H1 (cell line): ENCODE measurements at regions of chr7 and their contacts with region 1.

Region 1: DNA sequence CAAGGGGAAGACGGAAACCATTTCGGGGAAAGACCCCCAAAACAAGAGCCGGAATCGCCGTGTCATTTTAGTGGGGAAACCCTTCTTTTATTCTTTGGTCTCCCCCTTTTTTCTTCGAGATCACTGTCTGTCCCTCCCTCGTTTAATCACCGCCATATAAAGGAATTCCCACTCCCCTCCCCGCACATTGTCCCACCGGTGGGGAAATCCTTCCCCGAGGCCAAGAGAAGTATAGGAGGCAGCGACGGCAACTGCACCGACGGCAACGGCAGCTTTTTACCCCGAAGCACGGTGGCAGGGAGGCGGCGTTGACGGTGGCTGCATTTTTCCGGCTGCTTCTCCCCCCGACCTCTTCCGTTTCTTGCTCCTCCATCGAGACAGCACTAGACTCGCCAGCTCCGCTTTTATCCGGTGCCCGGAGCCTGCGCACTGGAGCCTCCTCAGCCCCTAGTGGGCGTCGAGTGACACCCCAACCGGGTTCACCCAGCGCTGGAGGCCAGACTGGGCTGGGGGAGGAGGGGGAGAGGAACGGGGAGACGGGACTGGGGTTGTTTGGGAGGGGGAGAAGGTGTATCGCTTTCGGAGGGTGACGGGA is 687 bp upstream of the KMT2E start:
- DNase-seq: peak; percentile 65 to 88
- H3K4me3 ChIP-seq: peak overlapping the region; percentile 89 to 99 (median 97)
- H3K27ac ChIP-seq: peak overlapping the region; percentile 100
- H3K4me1 ChIP-seq: peaks cover 0 to 9% (median 1%) of the 10 kb centered on the region in 4 experiments; a peak in 3 of 7 replicates
- H3K27me3 ChIP-seq: no peaks in the 10 kb centered on the region
- CTCF ChIP-seq: peak; percentile 37 to 58 (median 40)
- EP300 ChIP-seq: no peak
- POLR2A ChIP-seq: peak in 1 of 2 experiments; percentile 92; a peak in 2 of 3 replicates
- RAD21 ChIP-seq: no peak

Region 2: GRCh38 chr7:105003275-105003674 is 10.0 kb before region 1 on chr7:
- CTCF ChIA-PET with region 1: interaction called, 3 read pairs
- POLR2A ChIA-PET with region 1: interaction called, 56 read pairs
- DNase-seq: no peak
- H3K4me3 ChIP-seq: no peak overlapping the region
- H3K27ac ChIP-seq: no peak overlapping the region
- H3K4me1 ChIP-seq: peaks cover 0 to 8% (median 0%) of the 10 kb centered on the region in 4 experiments; a peak in 2 of 7 replicates
- H3K27me3 ChIP-seq: no peaks in the 10 kb centered on the region
- CTCF ChIP-seq: no peak
- EP300 ChIP-seq: no peak
- POLR2A ChIP-seq: no peak
- RAD21 ChIP-seq: no peak

Region 3: DNA sequence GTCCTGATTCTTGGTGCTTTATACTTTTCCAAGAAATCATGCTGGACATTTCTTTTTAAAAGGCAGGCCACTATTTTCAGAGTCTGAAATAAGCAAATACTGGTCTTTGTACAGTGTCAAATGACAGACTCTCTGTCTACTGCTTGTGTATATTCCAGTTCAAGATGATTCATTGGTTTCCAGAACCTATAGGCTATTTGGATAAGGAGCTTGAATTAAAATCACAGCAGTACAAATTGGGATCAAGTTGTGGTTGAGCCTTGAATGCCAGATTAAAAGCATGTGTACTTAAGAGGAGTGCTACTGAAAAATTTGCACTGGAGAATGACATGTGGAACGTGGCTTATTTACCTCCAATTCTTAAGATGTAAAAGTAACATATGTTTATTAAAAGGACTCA is 11.4 kb after region 1 on chr7:
- CTCF ChIA-PET with region 1: interaction called, 4 read pairs
- POLR2A ChIA-PET with region 1: interaction called, 42 read pairs
- DNase-seq: no peak
- H3K4me3 ChIP-seq: no peak overlapping the region
- H3K27ac ChIP-seq: no peak overlapping the region
- H3K4me1 ChIP-seq: peaks cover 0 to 6% (median 0%) of the 10 kb centered on the region in 4 experiments; a peak in 1 of 7 replicates
- H3K27me3 ChIP-seq: peaks cover 0 to 1% (median 0%) of the 10 kb centered on the region in 4 experiments; a peak in 1 of 7 replicates
- CTCF ChIP-seq: no peak
- EP300 ChIP-seq: no peak
- POLR2A ChIP-seq: no peak
- RAD21 ChIP-seq: no peak

Region 4: GRCh38 chr7:105037319-105037718 is 24.0 kb after region 1 on chr7:
- CTCF ChIA-PET with region 1: interaction called, 3 read pairs
- POLR2A ChIA-PET with region 1: interaction called, 12 read pairs
- DNase-seq: no peak
- H3K4me3 ChIP-seq: no peak overlapping the region
- H3K27ac ChIP-seq: no peak overlapping the region
- H3K4me1 ChIP-seq: no peaks in the 10 kb centered on the region
- H3K27me3 ChIP-seq: no peaks in the 10 kb centered on the region
- CTCF ChIP-seq: no peak
- EP300 ChIP-seq: no peak
- POLR2A ChIP-seq: no peak
- RAD21 ChIP-seq: no peak

Region 5: DNA sequence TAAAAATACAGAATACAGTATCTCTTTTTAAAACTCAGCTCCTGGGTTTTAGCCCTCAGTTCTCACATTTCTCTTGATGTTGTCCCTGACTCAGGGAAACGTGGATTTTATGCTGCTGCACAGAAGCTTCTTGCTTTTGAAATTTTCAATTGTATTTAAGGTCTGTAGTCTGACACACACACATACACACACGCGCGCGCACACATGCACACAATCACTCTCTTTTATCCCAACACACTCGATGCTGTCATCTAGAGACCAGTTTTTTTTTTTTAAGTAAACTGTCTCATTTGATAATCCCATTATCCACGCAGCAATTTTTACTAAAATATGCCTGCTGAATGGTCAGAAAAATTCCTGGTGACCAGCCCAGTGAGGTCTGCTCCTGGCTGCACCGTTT is 109.3 kb after region 1 on chr7:
- CTCF ChIA-PET with region 1: no interaction called
- POLR2A ChIA-PET with region 1: interaction called, 10 read pairs
- DNase-seq: no peak
- H3K4me3 ChIP-seq: no peak overlapping the region
- H3K27ac ChIP-seq: no peak overlapping the region
- H3K4me1 ChIP-seq: peaks cover 0 to 6% (median 1%) of the 10 kb centered on the region in 4 experiments; a peak in 3 of 7 replicates
- H3K27me3 ChIP-seq: no peaks in the 10 kb centered on the region
- CTCF ChIP-seq: no peak
- EP300 ChIP-seq: no peak
- POLR2A ChIP-seq: no peak
- RAD21 ChIP-seq: no peak